ENCODE measurements at regions of chr2 and their contacts with region 1.

Region 1: GRCh38 chr2:187541086-187542085 is 12.8 kb downstream of the TFPI start:
- DNase-seq: no peak
- ATAC-seq: peak; percentile 86
- H3K4me3 ChIP-seq: peak overlapping the region in 1 of 2 experiments; percentile 17; a peak in 2 of 4 replicates
- H3K27ac ChIP-seq: peak overlapping the region; percentile 98
- H3K4me1 ChIP-seq: peaks cover 60% of the 10 kb centered on the region
- H3K27me3 ChIP-seq: no peaks in the 10 kb centered on the region
- CTCF ChIP-seq: peak; percentile 8; the same call in 1 of the 2 replicates

Region 2: GRCh38 chr2:187499941-187500532 is 41.3 kb before region 1 on chr2:
- CTCF ChIA-PET with region 1: no interaction called
- POLR2A ChIA-PET with region 1: no interaction called
- in situ Hi-C with region 1: no loop called
- intact Hi-C with region 1: loop called (anchors 5 kb)
- DNase-seq: peak; percentile 56
- ATAC-seq: peak; percentile 71
- H3K4me3 ChIP-seq: no peak overlapping the region
- H3K27ac ChIP-seq: peak overlapping the region; percentile 97; the same call in 1 of the 2 replicates
- H3K4me1 ChIP-seq: peaks cover 58% of the 10 kb centered on the region
- H3K27me3 ChIP-seq: no peaks in the 10 kb centered on the region
- CTCF ChIP-seq: peak; percentile 79; the same call in 1 of the 2 replicates

Region 3: GRCh38 chr2:187574969-187575750 is 33.8 kb after region 1 on chr2:
- CTCF ChIA-PET with region 1: no interaction called
- POLR2A ChIA-PET with region 1: no interaction called
- in situ Hi-C with region 1: no loop called
- intact Hi-C with region 1: loop called (anchors 5 kb)
- DNase-seq: no peak
- ATAC-seq: peak; percentile 56
- H3K4me3 ChIP-seq: no peak overlapping the region
- H3K27ac ChIP-seq: peak overlapping the region; percentile 91
- H3K4me1 ChIP-seq: peaks cover 36% of the 10 kb centered on the region
- H3K27me3 ChIP-seq: no peaks in the 10 kb centered on the region
- CTCF ChIP-seq: no peak

Region 4: DNA sequence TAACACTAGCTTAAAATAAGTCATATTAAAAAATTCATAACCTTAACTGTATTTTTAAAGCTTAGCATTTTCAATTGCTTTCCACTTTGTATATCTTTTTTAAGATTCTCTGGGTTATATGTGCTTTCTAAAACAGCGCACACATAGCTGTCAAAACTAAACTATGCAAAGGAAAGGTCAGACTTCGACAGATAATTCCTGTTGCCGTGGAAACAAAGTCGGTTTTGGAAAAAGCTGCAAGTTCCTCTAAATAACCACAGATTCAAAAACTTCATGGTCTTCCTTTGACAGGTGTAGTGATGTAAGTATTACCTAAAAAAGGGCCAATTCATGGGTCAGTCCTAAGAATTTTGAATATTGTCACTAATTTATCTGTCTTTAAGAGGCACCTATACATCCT is 262.4 kb after region 1 on chr2:
- CTCF ChIA-PET with region 1: no interaction called
- POLR2A ChIA-PET with region 1: no interaction called
- in situ Hi-C with region 1: no loop called
- intact Hi-C with region 1: no loop called
- DNase-seq: no peak
- ATAC-seq: no peak
- H3K4me3 ChIP-seq: no peak overlapping the region
- H3K27ac ChIP-seq: no peak overlapping the region
- H3K4me1 ChIP-seq: no peaks in the 10 kb centered on the region
- H3K27me3 ChIP-seq: no peaks in the 10 kb centered on the region
- CTCF ChIP-seq: no peak

Measured in Panc1 (cell line).